Activated CD4-positive, alpha-beta T cell treated with anti-CD3 and anti-CD28 coated beads, Interleukin-2, amount 10 ng/mL, durations not matched to agents 24 days and 14 days (primary cell): ENCODE measurements at regions of chr16 and their contacts with region 1.

Region 1: DNA sequence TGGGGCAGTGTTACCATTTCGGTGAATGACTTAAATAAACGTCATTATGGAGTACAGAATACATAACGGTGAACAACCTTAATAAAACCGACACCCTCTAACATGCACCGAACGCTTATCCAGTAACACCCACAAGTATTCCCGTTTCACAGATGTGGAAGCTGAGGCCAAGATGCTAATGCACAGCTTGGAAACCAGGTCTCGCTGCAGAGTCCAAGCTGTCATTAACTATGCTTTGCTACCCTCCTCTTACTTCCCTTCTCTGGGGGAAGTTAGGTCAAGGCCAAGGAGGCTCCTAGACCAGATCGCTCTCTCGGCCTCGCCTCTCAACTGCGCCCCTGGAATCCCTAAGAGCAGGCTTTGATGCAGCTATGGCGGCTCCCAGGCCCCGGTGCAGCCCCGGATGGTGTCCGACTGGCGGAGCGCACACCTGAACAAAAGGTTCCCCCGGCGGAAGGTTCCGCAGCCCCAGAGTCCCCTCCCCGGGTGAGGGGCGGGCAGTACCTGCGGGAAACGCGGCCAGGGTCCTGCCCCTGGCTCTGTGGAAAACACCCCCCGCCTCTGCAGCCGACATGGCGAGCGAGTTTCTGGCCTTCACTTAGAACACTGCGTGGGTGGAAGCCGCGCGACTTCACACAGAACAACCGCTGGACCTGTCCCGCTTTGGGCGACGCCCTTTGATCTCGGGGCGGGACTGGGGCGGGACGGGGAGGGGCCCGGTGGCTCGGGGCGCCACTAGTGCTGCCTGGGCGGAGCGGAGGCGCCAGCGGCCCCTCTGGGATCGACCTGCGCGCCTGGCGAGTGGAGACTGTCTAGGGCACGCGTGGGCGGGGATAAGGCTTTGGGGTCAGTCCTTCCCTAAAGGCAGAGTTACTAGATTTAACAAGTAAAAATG is at the start of gene CPPED1:
- DNase-seq: peak; percentile 97
- H3K4me3 Mint-ChIP-seq: peak within 1 kb of the TSS; percentile 94
- H3K27ac Mint-ChIP-seq: peak within 1 kb of the TSS; percentile 94
- H3K4me1 Mint-ChIP-seq: peaks cover 33% of the 10 kb centered on the region
- H3K27me3 Mint-ChIP-seq: no peaks in the 10 kb centered on the region
- total RNA-seq, gene CPPED1: 4.4 and 5.1 TPM in 2 replicates

Region 2: DNA sequence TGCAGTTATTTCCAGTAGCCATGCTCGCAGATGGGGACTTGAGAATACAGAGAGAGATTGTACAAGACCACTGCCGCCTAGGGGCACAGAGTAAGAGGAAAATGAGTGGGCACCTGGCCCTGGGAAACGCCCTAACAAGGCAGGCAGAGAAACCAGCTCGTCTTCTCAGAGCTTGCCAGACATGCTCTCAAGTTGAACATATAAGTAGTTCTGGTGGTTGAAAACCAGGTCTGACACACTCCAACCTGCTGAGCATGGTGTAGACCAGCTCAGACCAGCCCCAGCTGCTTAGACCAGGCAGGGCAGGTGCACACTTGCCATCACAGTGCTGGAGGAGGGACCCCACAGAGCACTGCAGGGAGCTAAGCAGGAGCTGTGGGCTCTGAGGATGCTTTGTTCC is 250.3 kb before region 1 on chr16:
- intact Hi-C with region 1: loop called (anchors 5 kb)
- DNase-seq: no peak
- H3K4me3 Mint-ChIP-seq: no peak overlapping the region
- H3K27ac Mint-ChIP-seq: peak overlapping the region; percentile 23
- H3K4me1 Mint-ChIP-seq: peaks cover 41% of the 10 kb centered on the region
- H3K27me3 Mint-ChIP-seq: no peaks in the 10 kb centered on the region

Region 3: GRCh38 chr16:12646490-12647274 is 156.8 kb before region 1 on chr16:
- intact Hi-C with region 1: loop called (anchors 1 kb)
- DNase-seq: peak; percentile 82
- H3K4me3 Mint-ChIP-seq: peak overlapping the region; percentile 71
- H3K27ac Mint-ChIP-seq: peak overlapping the region; percentile 98
- H3K4me1 Mint-ChIP-seq: peaks cover 22% of the 10 kb centered on the region
- H3K27me3 Mint-ChIP-seq: peaks cover 5% of the 10 kb centered on the region

Region 4: DNA sequence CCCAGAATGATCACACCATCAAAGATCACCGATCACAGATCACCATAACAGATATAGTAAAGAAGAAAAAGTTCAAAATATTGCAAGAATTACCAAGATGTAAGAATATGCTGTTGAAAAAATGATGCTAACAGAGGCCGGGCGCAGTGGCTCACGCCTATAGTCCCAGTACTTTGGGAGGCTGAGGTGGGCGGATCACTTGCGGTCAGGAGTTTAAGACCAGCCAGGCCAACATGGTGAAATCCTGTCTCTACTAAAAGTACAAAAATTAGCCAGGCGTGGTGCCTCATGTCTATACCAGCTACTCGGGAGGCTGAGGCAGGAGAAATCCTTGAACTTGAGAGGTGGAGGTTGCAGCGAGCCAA is 52.9 kb before region 1 on chr16:
- intact Hi-C with region 1: loop called (anchors 1 kb)
- DNase-seq: peak; percentile 56
- H3K4me3 Mint-ChIP-seq: peak overlapping the region; percentile 50
- H3K27ac Mint-ChIP-seq: peak overlapping the region; percentile 87
- H3K4me1 Mint-ChIP-seq: peaks cover 26% of the 10 kb centered on the region
- H3K27me3 Mint-ChIP-seq: no peaks in the 10 kb centered on the region